ENCODE measurements at regions of chr17 and their contacts with region 1.

Region 1: GRCh38 chr17:32319548-32319905 is 22.4 kb downstream of the C17orf75 start:
- DNase-seq: peak; percentile 87
- ATAC-seq: peak; percentile 94
- H3K4me3 ChIP-seq: peak overlapping the region; percentile 19
- H3K27ac ChIP-seq: no peak overlapping the region
- H3K4me1 ChIP-seq: peaks cover 8% of the 10 kb centered on the region
- H3K27me3 ChIP-seq: no peaks in the 10 kb centered on the region
- CTCF ChIP-seq: peak; percentile 95

Region 2: DNA sequence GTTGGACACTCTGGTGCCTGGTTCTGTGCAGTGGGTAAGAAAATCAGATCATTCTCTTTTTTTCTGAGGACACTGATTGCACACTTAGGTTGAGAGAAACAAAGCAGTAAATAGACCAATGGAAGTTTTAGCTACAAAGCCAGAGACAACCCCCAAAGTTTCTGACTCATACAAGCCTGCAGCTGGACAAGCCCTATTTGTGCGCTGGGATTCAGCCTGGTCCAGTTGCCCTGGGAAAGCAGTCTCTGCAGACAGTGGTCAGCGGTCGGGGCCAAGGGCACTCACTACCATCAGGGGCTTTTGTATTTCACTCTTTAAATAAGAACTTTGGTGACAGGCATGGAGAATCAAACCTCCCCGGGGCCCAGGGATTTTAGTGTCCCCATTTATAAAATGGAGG is 59.9 kb before region 1 on chr17:
- intact Hi-C with region 1: loop called (anchors 5 kb)
- DNase-seq: no peak
- ATAC-seq: no peak
- H3K4me3 ChIP-seq: no peak overlapping the region
- H3K27ac ChIP-seq: no peak overlapping the region
- H3K4me1 ChIP-seq: no peaks in the 10 kb centered on the region
- H3K27me3 ChIP-seq: peaks cover 3% of the 10 kb centered on the region
- CTCF ChIP-seq: no peak

Region 3: DNA sequence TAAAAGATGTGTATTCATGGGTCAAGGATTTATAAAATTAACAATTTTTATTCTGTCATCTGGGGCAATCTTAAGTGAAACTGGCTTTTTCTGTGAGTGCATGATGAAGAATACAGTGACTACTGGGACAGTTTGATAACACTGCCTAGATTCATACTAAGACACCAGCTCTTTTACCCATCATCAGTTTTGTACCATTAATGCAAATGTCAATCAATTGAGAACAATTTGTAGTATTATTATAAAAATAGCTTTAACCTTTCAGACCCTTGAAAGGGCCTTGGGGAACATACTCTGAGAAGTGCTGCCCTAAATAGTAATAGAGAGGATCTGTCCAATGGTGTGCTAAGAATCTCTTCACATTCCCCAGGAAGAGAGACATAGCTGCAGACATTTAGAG is 79.4 kb after region 1 on chr17:
- intact Hi-C with region 1: no loop called
- DNase-seq: no peak
- ATAC-seq: no peak
- H3K4me3 ChIP-seq: no peak overlapping the region
- H3K27ac ChIP-seq: no peak overlapping the region
- H3K4me1 ChIP-seq: no peaks in the 10 kb centered on the region
- H3K27me3 ChIP-seq: no peaks in the 10 kb centered on the region
- CTCF ChIP-seq: no peak